Activated T-helper 2 cell treated with anti-CD3 and anti-CD28 coated beads, Interferon-gamma antibody, Interleukin-2, Interleukin-4, amounts not matched to agents 10 μg/mL and 5 μg/mL and 100 μg/mL, durations not matched to agents 14 hours and 24 hours and 36 hours (primary cell): ENCODE measurements at regions of chr12 and their contacts with region 1.

Region 1: DNA sequence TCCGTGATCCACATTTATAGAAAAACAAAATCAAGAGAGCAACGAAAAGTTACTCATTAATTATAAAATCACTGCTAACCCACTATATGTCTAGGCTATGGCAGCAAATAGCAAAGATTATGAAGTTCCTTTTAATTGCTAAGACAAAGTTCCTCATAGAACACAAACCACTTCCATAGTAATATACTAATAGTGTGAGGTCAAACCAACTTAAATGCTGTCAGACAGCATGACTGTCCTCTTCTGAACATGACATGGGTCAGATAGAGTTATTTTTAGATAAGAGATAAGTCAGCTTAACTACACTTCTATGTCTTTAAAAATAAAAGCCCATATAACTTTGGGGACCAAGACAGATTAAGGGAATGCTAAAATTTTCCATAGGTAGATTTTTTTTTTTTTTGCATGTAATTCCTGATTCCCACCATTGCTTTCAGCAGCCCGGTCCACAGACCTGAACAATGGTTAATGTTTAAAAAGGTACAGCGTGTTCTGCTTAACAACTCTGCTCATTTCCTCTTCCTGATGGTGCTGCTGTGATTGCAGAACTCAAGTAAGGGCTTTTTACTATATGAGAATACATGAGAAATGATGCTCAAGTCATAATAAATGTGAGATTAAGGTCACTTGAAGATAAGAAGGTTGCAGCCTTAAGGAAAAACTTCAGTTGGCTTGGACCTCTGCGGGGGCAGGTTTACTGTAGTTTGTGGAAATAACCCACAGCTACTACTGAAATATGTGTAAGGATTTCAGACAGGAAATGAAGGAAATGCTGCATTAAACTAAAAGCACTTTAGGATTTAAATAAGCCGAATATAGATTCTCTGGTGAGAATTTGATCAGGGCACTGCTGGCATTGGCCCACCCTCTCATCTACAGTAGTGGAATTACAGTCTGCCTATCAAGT is 37.7 kb upstream of the DUSP6 start:
- DNase-seq: no peak
- H3K4me3 Mint-ChIP-seq: peak overlapping the region; percentile 2
- H3K27ac Mint-ChIP-seq: peak overlapping the region; percentile 87
- H3K4me1 Mint-ChIP-seq: peaks cover 33% of the 10 kb centered on the region
- H3K27me3 Mint-ChIP-seq: no peaks in the 10 kb centered on the region

Region 2: GRCh38 chr12:89156862-89157262 is 233.1 kb before region 1 on chr12:
- intact Hi-C with region 1: loop called (anchors 1 kb)
- DNase-seq: no peak
- H3K4me3 Mint-ChIP-seq: no peak overlapping the region
- H3K27ac Mint-ChIP-seq: peak overlapping the region; percentile 39
- H3K4me1 Mint-ChIP-seq: peaks cover 30% of the 10 kb centered on the region
- H3K27me3 Mint-ChIP-seq: no peaks in the 10 kb centered on the region

Region 3: DNA sequence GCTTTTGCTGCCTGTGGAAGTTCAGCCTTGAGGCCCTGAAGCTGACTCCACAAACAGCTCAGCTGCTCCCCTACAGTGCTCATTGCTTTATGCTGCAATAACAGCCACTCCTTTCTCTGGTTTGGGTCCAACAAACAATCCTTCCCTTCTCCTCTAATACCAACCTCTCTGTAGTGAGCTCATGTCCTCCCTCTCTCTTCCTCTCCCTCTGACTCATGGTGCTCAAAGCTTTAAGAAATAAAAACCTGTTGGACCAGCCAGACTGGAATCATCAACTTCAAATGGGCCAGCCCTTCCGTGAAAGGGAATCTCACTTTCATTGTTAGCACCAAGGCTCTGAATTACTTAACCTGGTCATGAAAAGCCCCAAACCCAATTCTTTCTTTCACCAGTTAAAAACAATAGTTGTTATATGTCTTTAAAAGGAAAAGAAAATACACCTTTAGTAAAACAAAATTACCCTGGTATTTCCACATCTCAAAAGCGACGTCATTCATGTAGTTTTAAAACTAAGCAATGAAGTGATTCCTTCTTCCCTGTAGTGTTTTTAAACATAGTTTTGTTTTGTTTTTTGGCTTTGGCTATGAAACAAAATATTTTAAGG is 164.1 kb before region 1 on chr12:
- intact Hi-C with region 1: loop called (anchors 1 kb)
- DNase-seq: no peak
- H3K4me3 Mint-ChIP-seq: peak overlapping the region; percentile 70
- H3K27ac Mint-ChIP-seq: peak overlapping the region; percentile 100
- H3K4me1 Mint-ChIP-seq: peaks cover 67% of the 10 kb centered on the region
- H3K27me3 Mint-ChIP-seq: no peaks in the 10 kb centered on the region

Region 4: GRCh38 chr12:89373763-89374572 is 16.0 kb before region 1 on chr12:
- intact Hi-C with region 1: loop called (anchors 1 kb)
- DNase-seq: no peak
- H3K4me3 Mint-ChIP-seq: no peak overlapping the region
- H3K27ac Mint-ChIP-seq: no peak overlapping the region
- H3K4me1 Mint-ChIP-seq: peaks cover 50% of the 10 kb centered on the region
- H3K27me3 Mint-ChIP-seq: no peaks in the 10 kb centered on the region

Region 5: DNA sequence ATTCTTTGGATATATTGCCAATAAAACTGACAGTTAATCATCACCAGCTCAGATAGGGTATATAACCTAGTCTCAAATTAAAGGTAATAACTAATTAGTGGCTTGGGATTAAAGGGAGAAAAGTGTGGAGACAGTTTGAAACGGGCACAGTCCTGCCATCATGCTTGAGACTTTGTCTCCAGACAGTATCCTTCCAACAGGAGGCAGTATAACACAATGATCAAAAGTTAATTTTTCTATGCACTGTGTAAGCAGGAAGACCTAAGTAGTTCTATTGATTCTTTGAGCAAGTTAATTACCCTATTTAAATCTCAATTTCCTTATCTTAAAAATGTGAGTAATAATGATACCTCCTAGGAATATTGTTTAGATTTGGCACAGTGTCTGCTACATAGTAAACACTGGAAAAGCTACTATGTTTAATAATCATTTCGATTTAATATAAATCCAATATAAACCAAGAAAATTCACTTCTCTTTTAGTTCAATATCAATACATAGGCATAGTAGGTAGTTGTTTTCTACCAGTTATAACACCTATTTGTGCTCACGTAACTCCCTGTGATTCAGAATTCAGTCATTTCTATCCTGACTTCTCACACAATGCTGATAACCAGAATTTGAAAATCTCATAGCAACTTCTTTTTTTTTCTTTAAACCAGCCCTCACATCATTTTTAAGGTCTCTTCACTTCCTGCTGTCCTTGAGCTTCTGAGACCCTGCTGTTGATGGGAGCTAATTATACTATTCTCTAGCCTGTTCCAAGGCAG is 80.9 kb after region 1 on chr12:
- intact Hi-C with region 1: loop called (anchors 2 kb)
- DNase-seq: no peak
- H3K4me3 Mint-ChIP-seq: no peak overlapping the region
- H3K27ac Mint-ChIP-seq: peak overlapping the region; percentile 63
- H3K4me1 Mint-ChIP-seq: peaks cover 65% of the 10 kb centered on the region
- H3K27me3 Mint-ChIP-seq: no peaks in the 10 kb centered on the region

Region 6: DNA sequence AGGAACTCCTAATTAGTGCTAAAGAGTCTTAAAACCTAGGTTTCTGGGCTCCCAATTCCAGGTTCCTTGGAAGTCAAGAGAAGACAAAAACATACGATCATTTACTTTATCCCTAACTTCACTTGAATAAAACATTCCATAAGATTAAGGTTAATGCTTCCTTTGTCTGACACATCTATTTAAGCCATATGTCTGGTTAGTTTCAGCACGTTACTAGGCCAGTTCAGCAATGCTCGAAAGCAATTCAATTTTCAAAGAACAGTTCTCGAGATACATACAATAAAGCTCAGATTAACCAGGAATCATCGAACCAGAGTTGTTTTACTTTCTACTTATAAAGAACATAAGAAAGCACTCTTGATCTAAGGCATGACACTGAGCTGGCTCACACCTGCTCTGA is 203.9 kb after region 1 on chr12:
- intact Hi-C with region 1: no loop called
- DNase-seq: no peak
- H3K4me3 Mint-ChIP-seq: no peak overlapping the region
- H3K27ac Mint-ChIP-seq: no peak overlapping the region
- H3K4me1 Mint-ChIP-seq: peaks cover 15% of the 10 kb centered on the region
- H3K27me3 Mint-ChIP-seq: peaks cover 4% of the 10 kb centered on the region